Mammary epithelial cell (primary cell): ENCODE measurements at regions of chr19 and their contacts with region 1.

Region 1: DNA sequence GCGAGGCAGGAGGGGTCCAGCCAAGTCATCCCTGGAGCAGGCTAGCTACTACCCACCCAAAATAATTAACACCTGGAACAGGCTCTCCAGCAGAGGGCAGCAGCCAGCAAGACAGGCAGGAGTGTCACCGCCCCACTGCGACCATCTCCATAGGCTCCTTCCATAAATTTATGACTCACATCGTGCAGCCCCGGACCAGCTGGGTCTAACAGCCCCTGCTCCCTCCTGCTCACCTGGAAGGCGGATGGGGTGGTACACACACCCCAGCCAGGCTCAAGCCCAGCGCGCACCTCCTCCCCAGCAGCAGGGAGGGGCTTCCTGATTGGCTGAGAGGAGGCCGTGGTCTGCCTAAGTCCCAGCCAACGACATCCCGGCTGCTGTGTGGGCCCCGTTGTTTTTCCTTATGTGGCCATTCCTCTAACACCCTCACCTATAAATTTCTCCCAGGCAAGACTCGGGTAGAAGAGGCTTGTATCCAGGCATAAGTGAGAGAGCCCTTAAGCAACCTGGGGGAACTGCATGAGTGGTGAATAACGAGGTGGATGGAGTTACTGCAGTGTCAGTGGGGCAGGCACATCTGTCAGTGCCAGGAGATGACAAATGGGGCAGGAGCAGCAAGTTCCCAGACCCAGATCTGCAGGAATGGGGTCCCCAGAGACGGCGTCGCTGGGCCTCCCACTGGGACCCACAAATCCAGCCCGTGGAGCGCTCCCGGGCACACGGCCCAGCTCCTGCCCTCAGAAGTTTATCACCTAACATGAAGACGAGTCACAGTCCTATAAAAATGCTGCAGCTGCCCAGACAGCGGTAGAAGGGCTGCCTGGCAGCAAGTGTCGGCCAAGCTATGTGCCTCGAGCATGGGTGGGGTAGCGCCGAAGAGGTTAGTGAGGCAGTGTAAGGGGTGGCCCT is 43.1 kb downstream of the CEBPG start:
- DNase-seq: peak; percentile 44
- H3K4me3 ChIP-seq: peak overlapping the region in 1 of 3 experiments; percentile 17
- H3K27ac ChIP-seq: no peak overlapping the region
- H3K4me1 ChIP-seq: peaks cover 5% of the 10 kb centered on the region
- H3K27me3 ChIP-seq: no peaks in the 10 kb centered on the region
- CTCF ChIP-seq: peak; percentile 72 to 73

Region 2: DNA sequence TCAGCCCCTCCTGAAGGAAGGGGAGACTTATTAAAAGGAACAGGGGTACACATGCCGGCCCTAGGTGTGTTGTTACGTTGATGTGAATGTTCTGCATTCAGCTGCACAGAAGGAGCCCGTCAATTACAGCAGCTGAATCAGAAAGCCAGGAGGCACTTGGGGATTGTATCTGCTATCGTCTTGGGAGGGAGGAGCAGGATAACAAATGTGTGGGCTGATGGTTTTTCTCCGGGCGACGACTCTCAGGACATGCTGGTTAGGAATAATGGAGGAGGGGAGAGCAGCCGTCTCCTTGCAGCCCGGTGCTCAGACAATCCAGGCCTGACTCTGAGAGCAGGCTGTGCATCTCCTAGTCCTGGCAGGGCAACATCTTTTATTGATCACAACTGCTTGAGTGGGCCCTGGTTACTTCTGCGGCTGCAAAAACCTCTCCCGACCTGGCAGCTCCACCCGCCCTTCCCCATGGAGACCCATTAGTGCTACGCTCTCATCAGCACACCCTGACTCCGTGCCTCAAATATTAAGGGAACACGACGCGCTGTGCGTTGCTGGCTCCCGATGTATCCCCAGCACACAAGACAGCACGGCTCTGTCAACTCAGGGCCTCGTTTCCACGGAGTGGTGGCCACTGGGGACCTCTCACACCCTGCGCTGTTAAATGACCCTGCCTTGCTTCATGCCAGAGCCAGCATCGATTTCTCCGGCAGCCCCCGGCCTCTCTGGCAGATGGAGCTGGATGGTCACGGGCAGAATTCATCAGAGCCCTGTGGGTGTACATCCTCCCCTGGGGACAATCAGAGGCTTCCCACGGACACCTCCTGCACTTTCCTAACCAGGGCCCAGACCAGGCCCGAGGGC is 79.7 kb after region 1 on chr19:
- CTCF ChIA-PET with region 1: no interaction called
- dilution Hi-C with region 1: loop called (anchors 5 kb)
- in situ Hi-C with region 1: no loop called
- intact Hi-C with region 1: no loop called
- DNase-seq: no peak
- H3K4me3 ChIP-seq: no peak overlapping the region
- H3K27ac ChIP-seq: no peak overlapping the region
- H3K4me1 ChIP-seq: no peaks in the 10 kb centered on the region
- H3K27me3 ChIP-seq: no peaks in the 10 kb centered on the region
- CTCF ChIP-seq: no peak

Region 3: DNA sequence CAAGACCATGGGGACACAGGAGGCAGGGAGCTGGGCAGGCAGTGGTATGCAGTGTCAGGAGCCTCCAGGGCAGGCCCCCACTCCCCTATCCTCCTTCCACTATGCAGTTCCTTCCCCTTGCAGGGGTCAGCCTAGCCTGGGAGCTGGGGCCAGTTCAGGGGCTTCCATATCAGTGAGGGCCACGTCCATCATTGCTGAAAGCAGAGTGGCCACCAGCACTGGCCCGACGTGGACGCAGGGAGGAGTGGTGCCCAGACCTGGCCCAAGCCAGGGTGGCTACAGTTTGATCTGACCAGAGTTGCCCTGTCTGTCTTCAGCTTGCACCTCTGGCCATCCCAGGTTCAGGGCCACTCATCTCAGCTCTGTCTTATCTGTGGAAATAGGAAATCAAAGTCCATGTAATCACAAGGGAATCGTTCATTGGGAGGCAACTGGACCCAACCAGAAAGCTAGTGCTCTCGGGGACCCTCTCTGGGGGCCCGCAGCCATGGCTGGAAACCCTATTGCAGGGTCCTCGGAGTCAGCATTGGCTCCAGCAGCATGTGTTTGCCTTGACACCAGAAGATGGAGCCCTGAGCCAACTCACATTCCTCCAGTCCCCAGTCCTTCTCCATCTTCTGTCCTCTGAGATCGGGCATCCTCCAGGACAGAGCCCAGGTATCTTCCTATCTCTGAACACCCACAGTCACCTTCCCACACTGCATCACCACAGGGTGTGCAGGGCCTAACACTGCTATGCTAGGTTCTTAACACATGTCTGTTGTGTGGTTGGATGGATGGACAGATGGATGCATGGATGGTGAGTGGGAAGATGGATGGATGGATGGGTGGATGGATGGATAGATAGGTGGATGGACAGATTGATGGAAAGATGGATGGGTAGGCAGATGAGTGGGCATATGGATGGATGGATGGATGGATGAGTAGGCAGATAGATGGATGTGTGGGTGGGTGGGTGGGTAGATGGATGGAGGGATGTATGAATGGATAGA is 304.4 kb after region 1 on chr19:
- CTCF ChIA-PET with region 1: no interaction called
- dilution Hi-C with region 1: loop called (anchors 5 kb)
- in situ Hi-C with region 1: no loop called
- intact Hi-C with region 1: no loop called
- DNase-seq: no peak
- H3K4me3 ChIP-seq: no peak overlapping the region
- H3K27ac ChIP-seq: no peak overlapping the region
- H3K4me1 ChIP-seq: no peaks in the 10 kb centered on the region
- H3K27me3 ChIP-seq: peaks cover 2% of the 10 kb centered on the region
- CTCF ChIP-seq: no peak

Region 4: GRCh38 chr19:33998739-33999345 is 582.3 kb after region 1 on chr19:
- CTCF ChIA-PET with region 1: no interaction called
- dilution Hi-C with region 1: loop called (anchors 10 kb)
- in situ Hi-C with region 1: no loop called
- intact Hi-C with region 1: no loop called
- DNase-seq: no peak
- H3K4me3 ChIP-seq: no peak overlapping the region
- H3K27ac ChIP-seq: no peak overlapping the region
- H3K4me1 ChIP-seq: no peaks in the 10 kb centered on the region
- H3K27me3 ChIP-seq: no peaks in the 10 kb centered on the region
- CTCF ChIP-seq: peak; percentile 21 to 41